ENCODE measurements at regions of chr17 and their contacts with region 1.

Region 1: DNA sequence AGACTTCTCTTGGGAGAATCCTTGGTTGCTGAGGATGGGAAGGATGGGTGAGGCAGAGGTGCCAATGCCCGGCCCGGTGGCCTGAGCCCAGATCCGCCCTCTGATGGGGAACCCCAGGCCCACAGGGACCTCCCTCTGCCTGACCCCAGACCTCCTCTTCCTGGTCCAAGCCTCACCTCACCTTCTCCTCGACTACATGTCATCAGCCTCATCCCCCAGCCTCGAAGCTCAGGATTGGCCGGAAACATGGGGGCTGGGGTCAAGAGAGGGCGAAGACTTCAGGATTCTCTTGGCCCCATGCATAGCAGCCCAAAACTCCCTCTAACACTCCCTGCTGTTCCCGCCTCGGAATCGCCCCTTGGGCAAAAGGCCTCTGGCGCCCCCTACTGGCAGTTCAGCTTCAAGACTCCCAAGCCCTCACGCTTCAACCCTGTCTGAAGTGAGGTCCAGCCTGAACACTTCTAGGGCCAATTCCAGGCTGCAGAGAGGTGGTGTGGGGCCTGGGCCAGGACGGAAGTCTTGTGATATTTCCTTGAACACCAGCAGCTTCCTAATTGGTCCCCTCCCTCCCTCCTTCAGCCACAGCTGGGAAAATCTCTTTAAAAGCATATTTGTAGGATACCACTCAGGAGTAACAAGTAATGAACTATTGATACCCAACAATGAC is 47.2 kb downstream of the ARHGAP27 start:
- DNase-seq: peak; percentile 56
- ATAC-seq: peak; percentile 98
- H3K4me3 ChIP-seq: no peak overlapping the region
- H3K27ac ChIP-seq: 0 out of 2 replicates have a peak overlapping the region, but pooled peaks have one; percentile 50
- H3K4me1 ChIP-seq: peaks cover 15% of the 10 kb centered on the region
- H3K27me3 ChIP-seq: no peaks in the 10 kb centered on the region
- CTCF ChIP-seq: peak; percentile 99; a peak in 5 of 6 replicates
- EP300 ChIP-seq: no peak
- POLR2A ChIP-seq: no peak
- RAD21 ChIP-seq: peak; percentile 100

Region 2: GRCh38 chr17:45218895-45219661 is 166.4 kb before region 1 on chr17:
- CTCF ChIA-PET with region 1: interaction called, 105 read pairs
- POLR2A ChIA-PET with region 1: no interaction called
- RAD21 ChIA-PET with region 1: interaction called, 39 read pairs
- SMC1A ChIA-PET with region 1: interaction called, 66 read pairs
- in situ Hi-C with region 1: loop called (anchors 5 kb)
- intact Hi-C with region 1: loop called (anchors 1 kb)
- DNase-seq: no peak
- ATAC-seq: peak; percentile 42
- H3K4me3 ChIP-seq: no peak overlapping the region
- H3K27ac ChIP-seq: no peak overlapping the region
- H3K4me1 ChIP-seq: peaks cover 13% of the 10 kb centered on the region
- H3K27me3 ChIP-seq: no peaks in the 10 kb centered on the region
- CTCF ChIP-seq: peak; percentile 92 to 97 (median 94)
- EP300 ChIP-seq: no peak
- POLR2A ChIP-seq: no peak
- RAD21 ChIP-seq: peak; percentile 97

Region 3: DNA sequence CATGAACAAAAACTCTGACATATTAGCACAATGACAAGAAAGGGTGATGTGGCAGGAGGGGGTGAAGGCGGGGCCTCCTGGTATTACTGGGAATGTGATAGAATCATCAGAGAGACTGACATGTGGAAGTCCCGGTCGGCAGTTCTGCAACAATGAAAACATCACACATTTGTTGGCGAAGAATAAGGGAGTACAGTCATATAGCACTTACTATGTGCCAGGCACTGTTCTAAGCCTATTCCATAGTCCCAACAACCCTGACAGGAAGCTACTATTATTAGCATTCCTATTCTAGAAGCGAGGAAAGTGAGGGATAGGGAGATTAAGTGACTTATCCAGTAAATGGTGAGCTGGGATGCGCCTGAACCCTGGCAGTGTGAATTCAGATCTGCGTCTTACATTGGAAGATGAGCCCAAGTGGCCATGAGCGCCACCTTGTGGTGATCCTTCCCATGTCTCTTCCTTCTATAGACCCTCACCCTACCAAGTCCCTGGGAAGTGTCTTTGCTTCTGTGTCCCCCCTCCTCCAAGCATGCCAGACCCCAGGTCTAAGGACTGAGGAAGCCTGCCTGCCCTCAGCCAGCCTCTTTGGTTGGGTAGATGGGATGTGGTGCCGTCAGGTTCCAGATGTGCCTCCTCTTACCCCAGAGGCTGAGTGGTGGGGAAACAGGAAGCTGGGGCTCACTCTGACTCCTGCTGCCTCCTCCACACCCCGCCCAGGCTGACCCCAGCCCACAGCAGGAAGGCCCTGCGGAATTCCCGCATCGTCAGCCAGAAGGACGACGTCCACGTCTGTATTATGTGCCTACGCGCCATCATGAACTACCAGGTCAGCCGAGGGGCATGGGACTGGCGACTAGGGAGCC is 149.8 kb before region 1 on chr17:
- CTCF ChIA-PET with region 1: interaction called, 20 read pairs
- POLR2A ChIA-PET with region 1: no interaction called
- RAD21 ChIA-PET with region 1: interaction called, 6 read pairs
- SMC1A ChIA-PET with region 1: interaction called, 3 read pairs
- in situ Hi-C with region 1: no loop called
- intact Hi-C with region 1: no loop called
- DNase-seq: no peak
- ATAC-seq: peak; percentile 85
- H3K4me3 ChIP-seq: no peak overlapping the region
- H3K27ac ChIP-seq: no peak overlapping the region
- H3K4me1 ChIP-seq: peaks cover 2% of the 10 kb centered on the region
- H3K27me3 ChIP-seq: no peaks in the 10 kb centered on the region
- CTCF ChIP-seq: peak; percentile 78 to 84 (median 82)
- EP300 ChIP-seq: no peak
- POLR2A ChIP-seq: no peak
- RAD21 ChIP-seq: peak; percentile 69

Region 4: DNA sequence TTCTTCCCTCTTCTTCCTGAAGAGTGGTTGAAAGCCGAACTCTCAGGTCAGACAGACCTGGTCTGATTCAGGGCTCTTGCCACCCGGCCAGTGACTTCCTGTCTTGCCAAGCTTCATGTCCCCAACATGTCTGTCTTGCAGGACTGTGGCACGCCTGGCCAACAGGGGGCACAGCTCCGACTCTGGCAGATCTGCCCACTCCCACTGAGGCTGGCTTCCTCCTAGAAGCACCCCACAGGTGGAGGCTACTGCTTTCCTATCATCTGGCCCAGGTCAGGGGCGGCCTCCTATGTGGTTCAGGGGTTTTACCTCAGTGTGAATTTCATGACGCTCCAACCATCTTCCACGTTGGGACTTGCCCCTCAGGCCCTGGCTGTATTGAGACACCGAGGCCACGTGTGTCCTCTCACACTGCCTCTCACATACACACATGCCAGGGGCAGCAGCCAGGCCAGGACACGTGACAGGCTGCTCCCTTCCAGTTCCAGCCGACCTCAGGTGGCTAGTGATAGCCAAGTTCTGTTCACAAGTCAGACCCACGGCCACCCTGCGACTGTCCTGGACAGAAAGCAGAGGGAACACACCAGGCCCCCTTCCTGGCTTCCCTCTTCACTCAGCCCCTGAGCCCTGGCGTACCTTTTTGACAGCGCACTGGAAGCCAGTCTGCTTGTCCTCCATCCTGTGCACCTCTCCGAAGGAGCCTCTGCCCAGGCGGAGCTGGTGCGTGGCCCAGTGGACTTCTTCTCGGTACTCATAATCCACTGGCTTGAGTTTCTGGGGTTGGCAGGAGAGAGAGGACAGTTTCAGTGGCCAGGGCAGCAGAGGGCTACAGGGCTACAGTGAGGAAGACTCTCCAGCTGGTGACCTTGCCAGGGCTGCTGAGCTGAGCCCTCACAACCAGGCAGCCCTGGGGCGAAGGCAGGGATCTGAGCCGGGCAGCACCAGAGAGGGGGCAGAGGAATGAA is 101.0 kb before region 1 on chr17:
- CTCF ChIA-PET with region 1: interaction called, 291 read pairs
- POLR2A ChIA-PET with region 1: no interaction called
- RAD21 ChIA-PET with region 1: interaction called, 150 read pairs
- SMC1A ChIA-PET with region 1: interaction called, 5 read pairs
- in situ Hi-C with region 1: loop called (anchors 5 kb)
- intact Hi-C with region 1: no loop called
- DNase-seq: no peak
- ATAC-seq: peak; percentile 86
- H3K4me3 ChIP-seq: no peak overlapping the region
- H3K27ac ChIP-seq: peak overlapping the region; percentile 44
- H3K4me1 ChIP-seq: no peaks in the 10 kb centered on the region
- H3K27me3 ChIP-seq: no peaks in the 10 kb centered on the region
- CTCF ChIP-seq: peak; percentile 26 to 45 (median 43); a peak in 3 of 6 replicates
- EP300 ChIP-seq: no peak
- POLR2A ChIP-seq: peak; percentile 40
- RAD21 ChIP-seq: peak; percentile 26; the same call in 1 of the 2 replicates

Region 5: DNA sequence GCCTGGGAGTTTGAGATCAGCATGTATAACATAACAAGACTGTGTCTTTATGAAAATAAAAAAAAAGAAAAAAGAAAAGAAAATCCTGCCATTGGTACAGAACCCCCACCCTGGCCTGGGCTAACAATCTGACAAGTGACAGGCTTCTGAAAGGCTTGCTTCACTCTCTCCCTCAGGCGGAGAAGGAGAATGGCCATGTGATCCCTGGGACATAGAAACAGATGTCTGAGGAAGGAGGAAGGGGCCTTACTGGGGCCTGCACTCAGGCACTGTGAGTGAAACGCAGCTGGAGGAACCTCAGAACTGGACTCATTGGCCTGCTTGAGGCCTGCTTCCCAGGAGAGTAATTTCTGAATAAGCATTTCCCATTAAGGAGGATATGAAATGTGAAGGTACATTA is 86.1 kb before region 1 on chr17:
- CTCF ChIA-PET with region 1: interaction called, 34 read pairs
- POLR2A ChIA-PET with region 1: interaction called, 4 read pairs
- RAD21 ChIA-PET with region 1: interaction called, 15 read pairs
- SMC1A ChIA-PET with region 1: interaction called, 13 read pairs
- in situ Hi-C with region 1: no loop called
- intact Hi-C with region 1: loop called (anchors 5 kb)
- DNase-seq: no peak
- ATAC-seq: peak; percentile 3; the same call in 2 of the 3 replicates
- H3K4me3 ChIP-seq: no peak overlapping the region
- H3K27ac ChIP-seq: peak overlapping the region; percentile 89
- H3K4me1 ChIP-seq: peaks cover 89% of the 10 kb centered on the region
- H3K27me3 ChIP-seq: no peaks in the 10 kb centered on the region
- CTCF ChIP-seq: no peak
- EP300 ChIP-seq: no peak
- POLR2A ChIP-seq: no peak
- RAD21 ChIP-seq: no peak

Region 6: GRCh38 chr17:45332989-45333701 is 52.3 kb before region 1 on chr17:
- CTCF ChIA-PET with region 1: interaction called, 17 read pairs
- POLR2A ChIA-PET with region 1: interaction called, 7 read pairs
- RAD21 ChIA-PET with region 1: interaction called, 8 read pairs
- SMC1A ChIA-PET with region 1: interaction called, 10 read pairs
- in situ Hi-C with region 1: no loop called
- intact Hi-C with region 1: no loop called
- DNase-seq: no peak
- ATAC-seq: peak; percentile 78
- H3K4me3 ChIP-seq: peak overlapping the region; percentile 3; the same call in 1 of the 2 replicates
- H3K27ac ChIP-seq: peak overlapping the region; percentile 33
- H3K4me1 ChIP-seq: peaks cover 43% of the 10 kb centered on the region
- H3K27me3 ChIP-seq: no peaks in the 10 kb centered on the region
- CTCF ChIP-seq: no peak
- EP300 ChIP-seq: peak in 1 of 2 experiments; percentile 42; a peak in 1 of 4 replicates
- POLR2A ChIP-seq: no peak
- RAD21 ChIP-seq: no peak

Region 7: DNA sequence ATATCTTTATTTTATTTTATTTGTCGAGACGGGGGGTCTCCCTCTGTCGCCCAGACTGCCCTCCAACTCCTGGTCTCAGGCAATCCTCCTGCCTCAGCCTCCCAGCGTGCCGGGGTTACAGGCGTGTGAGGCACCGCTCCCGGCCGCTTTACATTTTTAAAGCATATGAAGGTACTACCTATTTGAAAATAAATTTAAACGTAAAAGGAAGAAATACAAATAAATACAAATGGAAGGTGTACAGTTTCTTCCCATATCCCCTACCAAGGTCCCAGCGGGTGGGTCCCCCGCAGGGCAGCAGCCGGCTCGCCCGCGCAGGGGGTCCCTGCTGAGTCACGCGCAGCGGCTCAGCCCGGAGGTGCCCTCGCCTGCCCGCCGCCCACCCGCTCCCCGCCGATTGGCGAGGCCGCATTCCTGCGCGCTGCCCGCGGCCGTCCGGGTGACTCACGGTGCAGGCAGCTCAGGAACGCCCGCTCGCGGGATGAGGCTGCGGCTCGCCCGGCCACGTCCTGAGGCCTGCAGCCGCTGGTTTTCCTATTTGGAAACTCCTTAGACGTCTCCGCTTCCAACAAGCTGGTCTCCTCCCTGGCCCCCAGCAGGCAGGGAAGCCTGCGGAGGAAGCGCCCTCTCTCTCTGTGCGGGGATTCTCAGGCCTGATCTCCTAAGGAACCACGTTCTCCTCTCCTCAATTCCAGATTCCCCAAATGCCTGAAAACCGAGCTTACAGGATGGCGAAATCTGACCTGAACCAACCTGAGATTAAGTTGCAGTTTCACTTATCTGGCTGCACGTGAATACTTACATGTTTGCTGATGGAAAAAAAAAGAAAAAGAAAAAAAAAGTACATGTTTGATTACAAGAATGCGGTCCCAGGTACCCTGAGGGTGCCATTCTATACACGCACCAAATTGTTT is 13.8 kb before region 1 on chr17:
- CTCF ChIA-PET with region 1: interaction called, 34 read pairs
- POLR2A ChIA-PET with region 1: interaction called, 4 read pairs
- RAD21 ChIA-PET with region 1: interaction called, 9 read pairs
- SMC1A ChIA-PET with region 1: interaction called, 31 read pairs
- in situ Hi-C with region 1: no loop called
- intact Hi-C with region 1: no loop called
- DNase-seq: no peak
- ATAC-seq: no peak
- H3K4me3 ChIP-seq: no peak overlapping the region
- H3K27ac ChIP-seq: 0 out of 2 replicates have a peak overlapping the region, but pooled peaks have one; percentile 17
- H3K4me1 ChIP-seq: peaks cover 33% of the 10 kb centered on the region
- H3K27me3 ChIP-seq: no peaks in the 10 kb centered on the region
- CTCF ChIP-seq: no peak
- EP300 ChIP-seq: no peak
- POLR2A ChIP-seq: no peak
- RAD21 ChIP-seq: no peak